Gastrocnemius medialis (tissue), 4 donors: ENCODE measurements at regions of chr5 and their contacts with region 1.

Region 1: GRCh38 chr5:68287976-68288706 is 72.6 kb downstream of the PIK3R1 start:
- DNase-seq: peak; percentile 71 to 85
- ATAC-seq: peak; percentile 81 to 85
- H3K4me3 ChIP-seq: peak overlapping the region; percentile 59 to 65 (median 64)
- H3K27ac ChIP-seq: peak overlapping the region; percentile 88 to 91 (median 90)
- H3K4me1 ChIP-seq: peaks cover 69 to 70% of the 10 kb centered on the region in 2 donors
- H3K27me3 ChIP-seq: no peaks in the 10 kb centered on the region
- CTCF ChIP-seq: no peak
- POLR2A ChIP-seq: peak; percentile 8 to 43

Region 2: DNA sequence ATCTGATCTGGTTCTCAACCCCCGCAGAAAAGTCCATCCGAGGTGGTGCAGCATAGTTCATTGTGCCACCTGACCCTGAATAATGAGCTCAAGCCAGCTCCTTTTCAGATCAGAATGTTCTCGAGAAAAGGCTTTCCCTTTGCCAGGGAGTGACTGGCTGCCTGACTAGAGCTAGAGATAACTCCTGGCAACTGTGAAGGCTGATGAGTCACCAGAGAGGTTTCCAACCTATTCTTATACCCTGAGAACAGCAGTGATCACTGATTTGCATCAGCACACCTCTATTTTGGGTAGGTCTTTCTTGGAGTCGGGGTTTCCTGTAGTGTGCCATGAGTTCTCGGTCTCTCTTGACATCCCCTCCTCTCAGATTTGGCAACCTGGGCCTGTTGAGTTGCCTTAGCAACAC is 55.3 kb after region 1 on chr5:
- in situ Hi-C with region 1: no loop called
- intact Hi-C with region 1: loop called (anchors 1 kb)
- DNase-seq: peak; percentile 85 to 89
- ATAC-seq: peak; percentile 98 to 99
- H3K4me3 ChIP-seq: no peak overlapping the region
- H3K27ac ChIP-seq: peak overlapping the region; percentile 57 to 76 (median 68)
- H3K4me1 ChIP-seq: peaks cover 7 to 20% of the 10 kb centered on the region in 2 donors
- H3K27me3 ChIP-seq: no peaks in the 10 kb centered on the region
- CTCF ChIP-seq: no peak
- POLR2A ChIP-seq: no peak

Region 3: GRCh38 chr5:68711293-68712200 is 423.4 kb after region 1 on chr5:
- in situ Hi-C with region 1: loop called in 1 of 4 experiments (anchors 25 kb)
- intact Hi-C with region 1: no loop called
- DNase-seq: peak in 1 of 2 donors; percentile 14
- ATAC-seq: peak in 1 of 2 donors; percentile 36
- H3K4me3 ChIP-seq: no peak overlapping the region
- H3K27ac ChIP-seq: peak overlapping the region; percentile 79 to 84 (median 82)
- H3K4me1 ChIP-seq: peaks cover 31 to 50% of the 10 kb centered on the region in 2 donors
- H3K27me3 ChIP-seq: no peaks in the 10 kb centered on the region
- CTCF ChIP-seq: no peak
- POLR2A ChIP-seq: no peak

Region 4: DNA sequence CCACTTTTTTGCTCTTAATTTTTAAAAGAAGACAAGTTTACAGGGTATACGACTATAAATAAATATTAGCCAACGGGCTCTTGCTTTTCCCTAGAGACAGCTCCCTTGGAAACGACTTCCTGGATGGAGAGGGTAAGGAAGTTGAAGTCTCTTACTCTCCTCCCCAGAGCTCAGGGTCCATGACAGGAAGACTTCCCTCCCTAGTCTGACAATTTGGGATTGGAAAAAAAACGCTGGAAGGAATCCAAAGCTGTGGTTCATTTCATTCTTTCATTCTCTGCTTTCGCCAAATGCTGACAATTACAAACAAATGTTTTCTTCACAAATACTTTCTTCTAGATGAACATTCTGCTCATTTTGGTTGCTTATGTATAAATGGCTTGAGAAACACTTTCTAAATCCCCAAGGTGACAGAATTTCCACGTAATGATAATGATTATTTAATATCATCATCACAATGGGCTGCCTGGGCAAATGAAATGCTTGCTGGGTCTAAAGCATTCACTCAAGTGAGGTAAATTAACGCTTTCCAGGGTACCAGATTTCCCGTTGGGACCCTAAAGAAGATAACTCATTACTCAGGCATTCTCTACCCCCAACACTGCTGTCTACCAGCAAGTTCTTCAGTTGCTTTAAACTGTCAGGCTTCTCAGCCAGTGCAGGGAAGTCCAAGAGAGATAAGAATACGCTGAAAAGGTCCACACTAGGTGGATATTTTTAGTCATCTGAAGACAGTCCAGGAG is 665.9 kb after region 1 on chr5:
- in situ Hi-C with region 1: loop called in 2 of 4 experiments (anchors 10 to 25 kb)
- intact Hi-C with region 1: no loop called
- DNase-seq: peak; percentile 16 to 20
- ATAC-seq: peak; percentile 77 to 80
- H3K4me3 ChIP-seq: no peak overlapping the region
- H3K27ac ChIP-seq: no peak overlapping the region
- H3K4me1 ChIP-seq: peaks cover 17 to 24% of the 10 kb centered on the region in 2 donors
- H3K27me3 ChIP-seq: no peaks in the 10 kb centered on the region
- CTCF ChIP-seq: no peak
- POLR2A ChIP-seq: no peak